K562 (cell line): ENCODE measurements at regions of chr1 and their contacts with region 1.

Region 1: GRCh38 chr1:93437976-93438605 is 9.8 kb upstream of the FNBP1L start:
- DNase-seq: peak; percentile 22 to 52 (median 38)
- ATAC-seq: peak; percentile 85
- H3K4me3 ChIP-seq: no peak overlapping the region
- H3K27ac ChIP-seq: no peak overlapping the region
- H3K4me1 ChIP-seq: peaks cover 0 to 8% of the 10 kb centered on the region in 2 experiments; a peak in 2 of 5 replicates
- H3K27me3 ChIP-seq: no peaks in the 10 kb centered on the region
- CTCF ChIP-seq: peak; percentile 40 to 80 (median 41); a peak in 4 of 6 replicates
- EP300 ChIP-seq: no peak
- POLR2A ChIP-seq: no peak
- RAD21 ChIP-seq: peak; percentile 93 to 94

Region 2: GRCh38 chr1:93567255-93567918 is 129.3 kb after region 1 on chr1:
- CTCF ChIA-PET with region 1: no interaction called
- POLR2A ChIA-PET with region 1: no interaction called
- in situ Hi-C with region 1: no loop called
- intact Hi-C with region 1: loop called (anchors 1 kb)
- DNase-seq: peak; percentile 80 to 95 (median 85)
- ATAC-seq: peak; percentile 97
- H3K4me3 ChIP-seq: peak overlapping the region; percentile 25
- H3K27ac ChIP-seq: peak overlapping the region; percentile 81
- H3K4me1 ChIP-seq: peaks cover 11 to 17% of the 10 kb centered on the region in 2 experiments
- H3K27me3 ChIP-seq: no peaks in the 10 kb centered on the region
- CTCF ChIP-seq: no peak
- EP300 ChIP-seq: peak; percentile 94
- POLR2A ChIP-seq: peak; percentile 63
- RAD21 ChIP-seq: peak; percentile 35 to 40; a peak in 2 of 4 replicates

Region 3: GRCh38 chr1:93629099-93630059 is 191.3 kb after region 1 on chr1:
- CTCF ChIA-PET with region 1: interaction called, 3 read pairs
- POLR2A ChIA-PET with region 1: no interaction called
- in situ Hi-C with region 1: no loop called
- intact Hi-C with region 1: loop called (anchors 1 kb)
- DNase-seq: peak; percentile 48 to 71 (median 52)
- ATAC-seq: peak; percentile 83
- H3K4me3 ChIP-seq: no peak overlapping the region
- H3K27ac ChIP-seq: no peak overlapping the region
- H3K4me1 ChIP-seq: no peaks in the 10 kb centered on the region
- H3K27me3 ChIP-seq: no peaks in the 10 kb centered on the region
- CTCF ChIP-seq: peak; percentile 70 to 95 (median 74)
- EP300 ChIP-seq: no peak
- POLR2A ChIP-seq: no peak
- RAD21 ChIP-seq: peak; percentile 99

Region 4: GRCh38 chr1:93839307-93839706 is 401.2 kb after region 1 on chr1:
- CTCF ChIA-PET with region 1: interaction called, 5 read pairs
- POLR2A ChIA-PET with region 1: interaction called, 4 read pairs
- in situ Hi-C with region 1: loop called (anchors 10 kb)
- intact Hi-C with region 1: loop called (anchors 2 kb)
- DNase-seq: no peak
- ATAC-seq: no peak
- H3K4me3 ChIP-seq: no peak overlapping the region
- H3K27ac ChIP-seq: no peak overlapping the region
- H3K4me1 ChIP-seq: peaks cover 0 to under 1% of the 10 kb centered on the region in 2 experiments; a peak in 1 of 5 replicates
- H3K27me3 ChIP-seq: no peaks in the 10 kb centered on the region
- CTCF ChIP-seq: no peak
- EP300 ChIP-seq: no peak
- POLR2A ChIP-seq: no peak
- RAD21 ChIP-seq: no peak